Posterior cingulate gyrus (tissue), 11 donors: ENCODE measurements at regions of chr5 and their contacts with region 1.

Region 1: DNA sequence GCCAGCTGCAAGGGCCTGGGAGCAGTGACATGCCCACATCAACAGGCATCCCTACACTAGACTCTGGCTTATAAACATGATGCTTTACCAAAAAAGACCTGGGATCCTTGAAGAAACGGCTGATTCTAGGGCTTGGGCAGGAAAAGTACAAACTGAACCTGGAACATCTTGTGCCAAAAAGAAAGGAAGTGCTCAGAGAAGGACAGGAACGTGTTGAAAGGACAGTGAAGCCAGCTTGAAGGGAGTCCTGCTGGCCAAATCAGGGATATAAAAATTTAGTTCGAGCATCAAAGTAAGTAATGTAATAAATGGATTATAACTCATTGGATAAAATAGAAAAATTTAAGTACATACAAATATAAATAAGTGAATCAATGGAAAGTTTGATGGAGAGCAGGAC is 58.1 kb downstream of the ALDH7A1 start:
- DNase-seq: no peak

Region 2: DNA sequence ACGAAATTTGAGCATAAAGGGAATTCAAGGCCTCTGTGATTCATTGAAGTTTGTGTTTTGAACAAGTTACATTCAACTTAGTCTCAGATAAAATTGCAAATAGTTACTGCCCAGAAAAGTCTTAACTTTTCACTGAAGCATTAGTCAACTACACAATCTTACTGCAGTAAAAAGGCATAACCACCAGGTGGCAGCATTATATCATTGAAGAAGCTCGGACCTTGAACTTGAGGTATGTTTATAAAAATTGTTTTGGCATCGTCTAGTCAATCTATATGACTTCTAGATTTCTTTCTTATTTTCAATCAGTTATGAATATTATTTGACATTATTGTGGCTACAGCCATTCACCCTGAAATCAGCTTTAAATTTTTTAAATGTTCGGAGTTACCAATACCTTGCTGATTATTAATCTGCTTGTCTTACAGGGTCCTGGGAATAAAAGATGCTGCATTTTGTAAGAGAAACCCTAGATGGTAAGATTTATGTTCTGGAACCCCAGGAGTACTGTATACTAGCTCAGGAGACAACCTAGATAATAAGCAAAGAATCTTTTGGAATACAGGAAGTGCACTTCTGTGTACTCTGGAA is 197.6 kb before region 1 on chr5:
- intact Hi-C with region 1: loop called (anchors 5 kb)
- DNase-seq: peak in 3 of 10 donors; percentile 9 to 42 (median 13)

Region 3: GRCh38 chr5:126422989-126423788 is 113.7 kb before region 1 on chr5 and contains the start of gene GRAMD2B:
- intact Hi-C with region 1: loop called (anchors 5 kb)
- DNase-seq: peak; percentile 67 to 95 (median 74)

Region 4: GRCh38 chr5:126600631-126601511 is 64.0 kb after region 1 on chr5 and contains the start of gene PHAX:
- intact Hi-C with region 1: loop called (anchors 2 kb)
- DNase-seq: peak; percentile 70 to 97 (median 78)